Sciatic nerve (tissue), 2 donors: ENCODE measurements at regions of chr10 and their contacts with region 1.

Region 1: GRCh38 chr10:69506834-69507721 is 55.8 kb downstream of the TSPAN15 start:
- DNase-seq: no peak
- ATAC-seq: peak; percentile 29

Region 2: GRCh38 chr10:69318106-69318866 is 188.8 kb before region 1 on chr10:
- intact Hi-C with region 1: no loop called
- DNase-seq: peak; percentile 93
- ATAC-seq: peak; percentile 94

Region 3: DNA sequence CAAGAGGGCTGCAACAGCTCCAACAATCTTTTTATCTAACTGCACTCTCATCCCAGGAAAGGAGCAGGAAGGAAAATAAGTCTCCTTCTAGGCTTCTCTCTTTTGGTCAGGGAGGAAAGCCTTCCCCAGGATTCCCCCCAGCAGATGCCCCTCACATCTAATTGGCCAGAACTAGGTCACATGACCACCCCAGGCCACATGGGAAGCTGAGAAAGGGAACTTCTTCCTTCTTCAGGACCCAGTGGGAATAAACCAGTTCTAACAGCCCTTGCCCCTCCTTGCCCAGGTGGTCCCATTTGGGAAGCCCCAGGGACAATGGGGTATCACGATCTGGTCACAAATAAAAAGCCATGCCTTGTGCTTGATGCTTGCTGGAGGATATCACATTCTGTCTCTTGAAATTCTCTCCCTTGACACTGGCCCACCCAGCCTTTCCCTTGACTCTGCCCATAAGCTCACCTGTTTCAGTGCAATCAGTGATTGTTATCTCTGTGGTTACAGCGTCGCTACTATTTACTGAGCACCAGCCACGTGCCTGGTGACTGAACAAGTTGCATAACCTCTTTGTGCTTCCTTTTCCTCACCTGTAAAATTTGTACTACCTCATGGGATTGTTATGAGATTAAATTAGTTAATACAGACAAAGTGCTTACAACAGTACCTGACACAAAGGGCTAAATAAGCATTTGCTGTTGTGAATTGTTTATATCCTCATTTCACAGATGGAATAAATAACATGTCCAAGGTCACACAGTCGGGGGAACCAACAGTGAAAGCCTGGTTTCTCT is 81.4 kb before region 1 on chr10:
- intact Hi-C with region 1: loop called (anchors 5 kb)
- DNase-seq: no peak
- ATAC-seq: no peak